Astrocyte of the cerebellum (primary cell): ENCODE measurements at regions of chr5 and their contacts with region 1.

Region 1: GRCh38 chr5:37326536-37326935 is 44.4 kb downstream of the NUP155 start:
- DNase-seq: no peak
- H3K4me3 ChIP-seq: no peak overlapping the region
- CTCF ChIP-seq: no peak

Region 2: DNA sequence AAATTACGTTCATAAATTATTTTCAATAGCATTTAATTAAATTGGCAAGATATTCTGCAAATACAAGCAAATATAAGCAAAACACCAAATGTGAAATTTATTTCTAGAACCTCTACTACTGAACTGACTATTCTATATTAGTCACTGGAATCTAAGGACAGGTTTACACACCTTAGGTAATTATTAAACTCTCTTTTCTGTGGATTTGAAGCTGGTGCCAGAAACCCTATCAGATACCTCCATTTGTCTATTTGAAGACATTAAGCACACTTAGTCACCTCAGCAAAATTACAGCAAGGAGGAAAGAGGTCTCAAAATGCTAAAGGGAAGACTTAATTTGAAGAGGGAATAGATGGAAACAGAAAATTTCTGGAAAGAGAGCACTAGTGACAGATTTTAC is 160.8 kb before region 1 on chr5:
- in situ Hi-C with region 1: loop called (anchors 25 kb)
- DNase-seq: no peak
- H3K4me3 ChIP-seq: no peak overlapping the region
- CTCF ChIP-seq: no peak